Heart left ventricle (tissue), 16 donors: ENCODE measurements at regions of chr2 and their contacts with region 1.

Region 1: GRCh38 chr2:224357098-224357901 is 44.6 kb downstream of the FAM124B start:
- DNase-seq: peak in 2 of 5 donors; percentile 27 to 39
- ATAC-seq: peak in 3 of 4 donors; percentile 66 to 80 (median 68)
- H3K4me3 ChIP-seq: no peak overlapping the region
- H3K27ac ChIP-seq: no peak overlapping the region
- H3K4me1 ChIP-seq: no peaks in the 10 kb centered on the region
- H3K27me3 ChIP-seq: no peaks in the 10 kb centered on the region
- CTCF ChIP-seq: peak; percentile 65 to 87 (median 80)
- POLR2A ChIP-seq: no peak

Region 2: DNA sequence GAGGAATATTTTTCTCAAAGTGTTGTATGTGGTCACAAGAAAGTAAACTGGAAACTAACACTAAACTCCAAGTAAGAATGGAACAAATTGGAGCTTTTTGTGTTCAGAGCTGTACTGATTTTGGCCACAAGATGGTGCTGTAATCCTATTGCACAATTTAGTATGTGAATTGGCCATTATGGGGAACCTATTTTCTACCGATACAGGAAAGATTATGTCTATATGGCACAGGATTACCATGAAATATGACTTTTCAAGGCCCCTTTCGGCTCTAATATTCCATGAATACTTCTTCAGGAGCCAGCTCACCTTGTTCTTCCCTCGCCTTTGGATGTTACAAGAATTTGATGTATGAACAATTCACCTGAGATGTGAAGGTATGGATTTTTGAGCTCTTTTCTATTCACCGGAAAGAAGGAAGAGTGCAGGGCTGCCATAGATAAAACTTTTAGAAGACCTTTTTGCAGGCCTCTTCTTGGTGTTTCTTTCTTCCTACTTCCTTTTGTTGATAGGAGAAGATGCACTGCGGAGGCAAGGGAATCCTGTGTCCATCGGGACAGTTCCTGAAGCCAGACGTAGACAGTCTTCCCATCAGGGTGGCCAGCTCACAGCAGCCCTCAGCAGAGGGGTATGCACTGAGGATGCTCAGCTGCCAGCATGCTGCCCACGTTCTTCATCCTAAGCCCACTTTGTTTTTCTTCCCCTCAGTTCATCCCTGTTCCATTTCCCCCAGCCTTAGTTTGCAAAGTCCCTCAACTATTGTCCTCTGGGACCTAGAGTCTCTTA is 386.8 kb before region 1 on chr2:
- intact Hi-C with region 1: loop called in 1 of 10 experiments (anchors 5 kb)
- DNase-seq: peak in 2 of 5 donors; percentile 26 to 29
- ATAC-seq: peak in 3 of 4 donors; percentile 46 to 55 (median 49)
- H3K4me3 ChIP-seq: no peak overlapping the region
- H3K27ac ChIP-seq: no peak overlapping the region
- H3K4me1 ChIP-seq: peaks cover 0 to 11% (median 0%) of the 10 kb centered on the region in 12 donors
- H3K27me3 ChIP-seq: no peaks in the 10 kb centered on the region
- CTCF ChIP-seq: peak; percentile 80 to 98 (median 92)
- POLR2A ChIP-seq: no peak

Region 3: GRCh38 chr2:224145751-224146355 is 211.4 kb before region 1 on chr2:
- intact Hi-C with region 1: no loop called
- DNase-seq: peak in 3 of 5 donors; percentile 36 to 68 (median 44)
- ATAC-seq: peak; percentile 32 to 88 (median 86)
- H3K4me3 ChIP-seq: no peak overlapping the region
- H3K27ac ChIP-seq: peak overlapping the region in 6 of 12 donors; percentile 13 to 82 (median 48)
- H3K4me1 ChIP-seq: peaks cover 0 to 21% (median 2%) of the 10 kb centered on the region in 12 donors
- H3K27me3 ChIP-seq: no peaks in the 10 kb centered on the region
- CTCF ChIP-seq: no peak
- POLR2A ChIP-seq: no peak

Region 4: DNA sequence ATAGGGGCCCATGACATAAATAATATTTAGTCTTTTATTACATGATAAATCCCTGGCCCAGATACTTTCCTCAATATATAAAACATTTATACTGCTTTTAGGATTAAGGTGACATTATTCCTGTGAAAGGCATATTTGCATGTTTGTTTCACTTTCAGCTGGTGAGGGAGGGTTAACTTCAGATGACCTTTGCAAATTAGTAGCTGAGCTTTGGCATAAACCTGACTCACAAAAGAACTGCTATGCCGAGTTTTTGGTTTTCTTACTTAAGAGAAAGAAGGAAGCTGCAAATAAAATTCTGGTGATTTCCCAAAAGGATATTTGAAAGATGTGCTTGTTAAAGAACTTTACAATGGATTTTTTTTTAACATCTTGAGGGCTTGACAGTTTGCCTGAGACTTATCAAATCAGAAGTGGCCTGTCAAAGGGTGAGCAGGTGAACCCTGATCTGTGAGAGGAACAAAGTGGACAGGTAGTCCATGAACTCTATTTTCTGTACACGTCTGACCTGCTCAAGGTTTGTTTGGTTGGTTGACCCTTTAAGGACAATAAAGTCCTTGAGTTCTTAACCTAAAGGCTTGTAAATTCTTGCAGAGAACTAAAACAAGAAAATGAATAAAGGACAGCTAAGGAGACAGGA is 48.9 kb before region 1 on chr2:
- intact Hi-C with region 1: no loop called
- DNase-seq: no peak
- ATAC-seq: no peak
- H3K4me3 ChIP-seq: no peak overlapping the region
- H3K27ac ChIP-seq: no peak overlapping the region
- H3K4me1 ChIP-seq: no peaks in the 10 kb centered on the region
- H3K27me3 ChIP-seq: peaks cover 0 to 8% (median 0%) of the 10 kb centered on the region in 9 donors
- CTCF ChIP-seq: no peak
- POLR2A ChIP-seq: no peak

Region 5: DNA sequence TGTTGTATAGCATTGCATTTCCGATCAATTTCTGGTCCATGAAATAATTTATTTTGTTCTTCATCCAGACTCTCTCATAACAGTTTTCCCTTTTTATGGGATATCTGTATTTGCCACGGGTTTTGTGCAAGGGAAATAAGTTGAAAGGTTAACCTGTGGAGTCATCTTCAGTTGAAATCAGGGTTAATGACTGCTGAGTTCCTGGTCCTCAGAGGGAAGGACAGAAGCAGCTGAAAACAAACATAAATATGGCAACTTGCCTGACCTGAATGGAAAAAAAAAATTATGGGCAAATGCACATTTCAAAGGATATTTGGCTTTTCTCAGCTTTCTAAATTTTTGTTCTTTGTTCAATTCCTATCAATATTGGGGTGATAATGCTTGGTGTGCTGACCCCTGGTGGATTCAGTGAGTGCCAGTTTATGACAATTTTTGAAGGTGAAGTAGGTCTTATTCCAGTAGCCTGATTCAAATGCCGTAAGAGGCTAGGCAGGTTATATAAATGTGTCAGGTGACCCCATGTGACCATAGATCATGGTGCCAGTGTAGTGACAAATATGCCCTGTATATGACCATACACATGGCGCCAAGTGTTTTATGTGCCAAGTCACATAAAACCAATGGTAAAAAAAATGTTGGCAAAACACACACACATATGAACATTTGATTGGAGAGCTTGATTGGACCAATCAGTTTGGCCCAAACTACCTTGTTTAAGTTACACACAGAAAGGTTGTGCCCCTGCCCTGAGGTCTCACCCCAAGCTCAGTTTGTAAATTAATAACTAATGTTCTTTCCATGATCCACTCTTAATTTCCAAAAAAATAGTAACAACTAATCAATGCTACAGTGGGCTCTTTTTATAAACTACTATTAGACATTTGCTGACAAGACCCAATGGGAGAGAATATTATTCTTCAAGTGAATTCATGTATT is 92.2 kb after region 1 on chr2:
- intact Hi-C with region 1: loop called (anchors 1 to 5 kb)
- DNase-seq: no peak
- ATAC-seq: no peak
- H3K4me3 ChIP-seq: no peak overlapping the region
- H3K27ac ChIP-seq: no peak overlapping the region
- H3K4me1 ChIP-seq: no peaks in the 10 kb centered on the region
- H3K27me3 ChIP-seq: no peaks in the 10 kb centered on the region
- CTCF ChIP-seq: peak; percentile 34 to 69 (median 54)
- POLR2A ChIP-seq: no peak

Region 6: GRCh38 chr2:224520064-224520463 is 162.8 kb after region 1 on chr2:
- intact Hi-C with region 1: no loop called
- DNase-seq: no peak
- ATAC-seq: no peak
- H3K4me3 ChIP-seq: no peak overlapping the region
- H3K27ac ChIP-seq: no peak overlapping the region
- H3K4me1 ChIP-seq: peaks cover 0 to 78% (median 31%) of the 10 kb centered on the region in 12 donors
- H3K27me3 ChIP-seq: no peaks in the 10 kb centered on the region
- CTCF ChIP-seq: no peak
- POLR2A ChIP-seq: no peak

Region 7: DNA sequence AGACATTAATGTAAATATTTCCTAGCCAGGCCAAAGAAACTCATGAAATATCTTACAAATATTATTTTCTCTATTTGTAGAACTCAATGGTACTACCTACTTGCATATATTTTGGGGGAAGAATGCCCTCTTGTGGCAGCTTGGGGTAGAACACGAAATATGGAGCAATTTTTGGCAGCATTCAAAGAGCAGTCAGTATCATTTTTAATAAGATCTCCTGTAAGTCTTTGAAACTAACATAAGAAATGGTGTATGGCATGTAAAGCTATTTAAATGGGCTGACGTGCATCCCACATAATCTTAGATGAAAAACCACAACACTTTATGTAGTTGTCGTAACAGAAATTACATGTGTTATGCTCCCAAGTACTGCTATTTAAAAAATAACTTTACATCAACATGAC is 421.2 kb after region 1 on chr2:
- intact Hi-C with region 1: loop called in 8 of 10 experiments (anchors 2 to 10 kb)
- DNase-seq: peak in 1 of 5 donors; percentile 15
- ATAC-seq: peak in 1 of 4 donors; percentile 52
- H3K4me3 ChIP-seq: no peak overlapping the region
- H3K27ac ChIP-seq: no peak overlapping the region
- H3K4me1 ChIP-seq: no peaks in the 10 kb centered on the region
- H3K27me3 ChIP-seq: no peaks in the 10 kb centered on the region
- CTCF ChIP-seq: peak; percentile 66 to 84 (median 76)
- POLR2A ChIP-seq: no peak

Region 8: GRCh38 chr2:225660262-225661131 is 1303.2 kb after region 1 on chr2:
- intact Hi-C with region 1: loop called in 2 of 10 experiments (anchors 10 kb)
- DNase-seq: peak; percentile 38 to 76 (median 52)
- ATAC-seq: peak in 3 of 4 donors; percentile 48 to 71 (median 53)
- H3K4me3 ChIP-seq: no peak overlapping the region
- H3K27ac ChIP-seq: no peak overlapping the region
- H3K4me1 ChIP-seq: no peaks in the 10 kb centered on the region
- H3K27me3 ChIP-seq: peaks cover 0 to 33% (median 0%) of the 10 kb centered on the region in 9 donors
- CTCF ChIP-seq: peak; percentile 62 to 89 (median 80)
- POLR2A ChIP-seq: no peak